B cell (primary cell): ENCODE measurements at regions of chr7 and their contacts with region 1.

Region 1: GRCh38 chr7:24722386-24723177 is 34.7 kb downstream of the GSDME start:
- DNase-seq: no peak
- ATAC-seq: no peak
- H3K4me3 ChIP-seq: no peak overlapping the region
- H3K4me3 Mint-ChIP-seq: no peak overlapping the region
- H3K27ac ChIP-seq: no peak overlapping the region
- H3K27ac Mint-ChIP-seq: peak overlapping the region; percentile 44
- H3K4me1 ChIP-seq: peaks cover 36 to 51% of the 10 kb centered on the region in 2 donors
- H3K4me1 Mint-ChIP-seq: peaks cover 78% of the 10 kb centered on the region
- H3K27me3 ChIP-seq: no peaks in the 10 kb centered on the region
- H3K27me3 Mint-ChIP-seq: no peaks in the 10 kb centered on the region
- CTCF ChIP-seq: no peak

Region 2: DNA sequence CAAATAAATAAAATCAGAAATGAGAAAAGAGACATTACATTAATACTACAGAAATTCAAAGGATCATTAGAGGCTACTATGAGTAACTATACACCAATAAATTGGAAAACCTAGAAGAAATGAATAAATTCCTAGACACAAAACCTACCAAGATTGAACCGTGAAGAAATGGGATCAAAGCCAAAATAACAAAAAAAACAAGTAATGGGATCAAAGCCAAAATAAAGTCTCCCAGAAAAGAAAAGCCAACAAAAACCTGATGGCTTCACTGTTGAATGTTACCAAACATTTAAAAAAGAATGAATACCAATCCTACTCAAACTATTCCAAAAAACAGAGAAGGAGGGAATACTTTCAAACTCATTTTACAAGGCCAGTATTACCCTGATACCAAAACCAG is 14.7 kb after region 1 on chr7:
- CTCF ChIA-PET with region 1: no interaction called
- POLR2A ChIA-PET with region 1: no interaction called
- intact Hi-C with region 1: no loop called
- DNase-seq: no peak
- ATAC-seq: no peak
- H3K4me3 ChIP-seq: no peak overlapping the region
- H3K4me3 Mint-ChIP-seq: no peak overlapping the region
- H3K27ac ChIP-seq: no peak overlapping the region
- H3K27ac Mint-ChIP-seq: no peak overlapping the region
- H3K4me1 ChIP-seq: no peaks in the 10 kb centered on the region
- H3K4me1 Mint-ChIP-seq: no peaks in the 10 kb centered on the region
- H3K27me3 ChIP-seq: no peaks in the 10 kb centered on the region
- H3K27me3 Mint-ChIP-seq: peaks cover 9% of the 10 kb centered on the region
- CTCF ChIP-seq: no peak

Region 3: GRCh38 chr7:24757353-24758275 is 35.0 kb after region 1 on chr7 and contains the start of gene GSDME:
- CTCF ChIA-PET with region 1: interaction called, 6 read pairs
- POLR2A ChIA-PET with region 1: no interaction called
- intact Hi-C with region 1: loop called (anchors 1 kb)
- DNase-seq: peak; percentile 56
- ATAC-seq: peak; percentile 86
- H3K4me3 ChIP-seq: peak within 1 kb of the TSS; percentile 26 to 84 (median 54)
- H3K4me3 Mint-ChIP-seq: peak within 1 kb of the TSS; percentile 92
- H3K27ac ChIP-seq: no peak within 1 kb of the TSS
- H3K27ac Mint-ChIP-seq: peak within 1 kb of the TSS; percentile 67
- H3K4me1 ChIP-seq: peaks cover 16 to 19% of the 10 kb centered on the region in 2 donors
- H3K4me1 Mint-ChIP-seq: peaks cover 27% of the 10 kb centered on the region
- H3K27me3 ChIP-seq: peaks cover 0 to 52% (median 31%) of the 10 kb centered on the region in 4 experiments
- H3K27me3 Mint-ChIP-seq: peaks cover 45% of the 10 kb centered on the region
- CTCF ChIP-seq: no peak
- total RNA-seq, gene GSDME: 10.6 and 11.9 TPM in 2 replicates

Region 4: GRCh38 chr7:24767878-24768569 is 45.4 kb after region 1 on chr7:
- CTCF ChIA-PET with region 1: no interaction called
- POLR2A ChIA-PET with region 1: no interaction called
- intact Hi-C with region 1: no loop called
- DNase-seq: no peak
- ATAC-seq: no peak
- H3K4me3 ChIP-seq: no peak overlapping the region
- H3K4me3 Mint-ChIP-seq: no peak overlapping the region
- H3K27ac ChIP-seq: no peak overlapping the region
- H3K27ac Mint-ChIP-seq: no peak overlapping the region
- H3K4me1 ChIP-seq: no peaks in the 10 kb centered on the region
- H3K4me1 Mint-ChIP-seq: peaks cover 5% of the 10 kb centered on the region
- H3K27me3 ChIP-seq: peaks cover 0 to 10% (median 6%) of the 10 kb centered on the region in 4 experiments
- H3K27me3 Mint-ChIP-seq: peaks cover 29% of the 10 kb centered on the region
- CTCF ChIP-seq: no peak